Right lobe of liver (tissue), 6 donors: ENCODE measurements at regions of chr17 and their contacts with region 1.

Region 1: DNA sequence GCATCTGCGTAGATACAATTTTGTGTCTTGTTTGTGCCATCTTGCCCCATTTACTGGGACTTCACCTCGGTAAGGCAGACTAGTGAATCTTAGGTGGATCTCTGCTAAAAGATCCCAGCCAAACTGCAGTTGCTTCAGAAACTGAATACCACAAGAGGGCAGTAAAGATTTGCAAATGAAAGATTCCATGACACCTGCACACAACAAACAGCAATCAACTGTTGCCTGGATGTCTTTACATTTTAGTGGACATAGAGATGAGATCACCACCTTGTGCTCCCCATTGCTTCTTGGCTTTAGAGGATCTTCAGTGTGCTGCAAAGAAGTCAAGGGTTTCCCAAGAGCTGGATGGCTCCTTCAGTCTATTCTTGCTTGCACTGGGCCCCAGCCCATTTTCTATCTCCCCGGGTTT is 119.2 kb upstream of the CACNG5 start:
- DNase-seq: no peak
- ATAC-seq: peak; percentile 73 to 81 (median 78)
- H3K4me3 ChIP-seq: no peak overlapping the region
- H3K27ac ChIP-seq: no peak overlapping the region
- H3K4me1 ChIP-seq: no peaks in the 10 kb centered on the region
- H3K27me3 ChIP-seq: no peaks in the 10 kb centered on the region
- CTCF ChIP-seq: peak; percentile 62 to 74 (median 72)
- POLR2A ChIP-seq: no peak

Region 2: DNA sequence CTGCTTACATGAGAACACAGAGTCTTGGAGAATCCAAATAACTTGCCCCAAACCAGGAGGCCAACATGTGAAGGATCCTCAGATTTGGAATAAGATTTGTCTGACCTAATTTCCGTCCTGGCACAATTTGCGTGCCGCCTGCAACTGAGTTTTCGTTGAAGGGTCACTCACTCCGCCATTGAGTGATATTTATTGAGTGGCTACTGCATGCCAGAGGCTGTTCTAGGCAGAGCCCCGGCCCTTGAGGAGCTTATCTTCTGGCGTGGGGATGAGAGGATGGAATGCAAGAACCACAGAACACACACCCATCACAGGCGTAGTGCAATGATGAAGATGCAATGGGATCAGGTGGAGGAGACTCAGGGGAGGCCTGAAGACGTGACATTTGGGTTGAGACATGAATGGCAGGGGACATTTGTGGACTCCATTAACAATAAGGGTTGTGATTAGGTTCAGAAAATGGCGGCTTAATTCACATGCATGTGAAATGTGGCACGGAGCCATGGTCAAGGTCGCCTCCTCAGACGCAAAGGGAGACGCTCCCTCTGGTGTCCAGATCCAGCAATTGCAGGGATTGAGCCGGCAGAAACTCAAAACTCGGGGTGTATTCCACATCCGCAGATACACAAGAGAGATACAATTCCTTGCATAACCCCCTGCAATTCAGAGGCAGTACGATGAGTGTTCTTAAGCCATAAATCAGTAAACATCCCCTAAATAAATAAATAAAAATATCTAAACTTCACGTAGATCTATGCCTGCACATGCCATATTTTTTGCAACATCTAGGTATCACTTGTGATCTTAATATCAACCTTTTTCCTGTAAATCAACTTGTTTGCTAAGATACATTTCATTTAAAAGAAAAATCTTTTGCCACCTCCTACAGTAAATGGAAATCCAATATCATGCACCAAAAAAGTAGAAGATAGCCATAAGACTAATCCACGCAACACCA is 190.8 kb after region 1 on chr17:
- intact Hi-C with region 1: loop called (anchors 5 to 10 kb)
- DNase-seq: peak; percentile 79 to 82 (median 81)
- ATAC-seq: peak; percentile 75 to 89 (median 81)
- H3K4me3 ChIP-seq: no peak overlapping the region
- H3K27ac ChIP-seq: no peak overlapping the region
- H3K4me1 ChIP-seq: no peaks in the 10 kb centered on the region
- H3K27me3 ChIP-seq: no peaks in the 10 kb centered on the region
- CTCF ChIP-seq: peak; percentile 84 to 93 (median 88)
- POLR2A ChIP-seq: no peak

Region 3: GRCh38 chr17:67018471-67019437 is 303.0 kb after region 1 on chr17:
- intact Hi-C with region 1: no loop called
- DNase-seq: no peak
- ATAC-seq: no peak
- H3K4me3 ChIP-seq: no peak overlapping the region
- H3K27ac ChIP-seq: no peak overlapping the region
- H3K4me1 ChIP-seq: no peaks in the 10 kb centered on the region
- H3K27me3 ChIP-seq: no peaks in the 10 kb centered on the region
- CTCF ChIP-seq: no peak
- POLR2A ChIP-seq: no peak